Common myeloid progenitor, CD34-positive (primary cell): ENCODE measurements at regions of chr7 and their contacts with region 1.

Region 1: GRCh38 chr7:100563809-100564400 is 9.8 kb downstream of the SAP25 start:
- DNase-seq: peak; percentile 77 to 89 (median 85)
- H3K4me3 ChIP-seq: no peak overlapping the region
- H3K27ac ChIP-seq: no peak overlapping the region
- H3K4me1 ChIP-seq: peaks cover 0 to 25% (median 20%) of the 10 kb centered on the region in 4 experiments
- H3K27me3 ChIP-seq: no peaks in the 10 kb centered on the region

Region 2: DNA sequence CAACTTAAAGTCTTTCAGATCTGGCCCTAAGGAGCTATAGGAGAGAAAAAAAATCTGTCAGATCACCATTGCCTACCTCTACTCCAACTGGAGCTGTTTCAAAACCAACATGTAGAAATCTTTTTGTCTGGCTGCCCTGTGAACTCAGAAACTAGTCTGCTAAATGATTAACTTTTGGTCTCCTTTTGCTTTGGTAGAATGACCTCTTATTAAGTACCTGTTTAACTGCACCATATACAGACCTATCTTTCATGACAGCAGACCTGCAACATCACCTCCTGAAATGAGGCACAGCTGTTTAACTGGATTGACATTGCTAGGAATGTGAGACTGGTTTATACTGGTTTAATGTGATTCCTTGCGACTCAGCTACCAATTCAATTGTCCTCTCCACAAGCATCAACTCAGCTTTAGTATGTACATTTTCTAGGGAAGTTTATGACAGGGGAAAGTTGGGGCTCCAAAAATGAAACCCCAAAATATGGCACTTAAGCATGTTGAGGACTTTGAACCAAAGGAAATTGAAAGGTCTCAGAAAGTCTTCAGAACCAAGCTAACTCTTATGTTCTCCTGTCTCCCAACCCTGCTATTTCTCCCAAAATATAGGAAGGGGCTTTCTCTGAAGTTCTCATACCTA is 734.3 kb before region 1 on chr7:
- CTCF ChIA-PET with region 1: no interaction called
- POLR2A ChIA-PET with region 1: no interaction called
- DNase-seq: no peak
- H3K4me3 ChIP-seq: no peak overlapping the region
- H3K27ac ChIP-seq: no peak overlapping the region
- H3K4me1 ChIP-seq: peaks cover 0 to 3% (median 2%) of the 10 kb centered on the region in 4 experiments
- H3K27me3 ChIP-seq: peaks cover 0 to 10% (median 0%) of the 10 kb centered on the region in 5 experiments

Region 3: DNA sequence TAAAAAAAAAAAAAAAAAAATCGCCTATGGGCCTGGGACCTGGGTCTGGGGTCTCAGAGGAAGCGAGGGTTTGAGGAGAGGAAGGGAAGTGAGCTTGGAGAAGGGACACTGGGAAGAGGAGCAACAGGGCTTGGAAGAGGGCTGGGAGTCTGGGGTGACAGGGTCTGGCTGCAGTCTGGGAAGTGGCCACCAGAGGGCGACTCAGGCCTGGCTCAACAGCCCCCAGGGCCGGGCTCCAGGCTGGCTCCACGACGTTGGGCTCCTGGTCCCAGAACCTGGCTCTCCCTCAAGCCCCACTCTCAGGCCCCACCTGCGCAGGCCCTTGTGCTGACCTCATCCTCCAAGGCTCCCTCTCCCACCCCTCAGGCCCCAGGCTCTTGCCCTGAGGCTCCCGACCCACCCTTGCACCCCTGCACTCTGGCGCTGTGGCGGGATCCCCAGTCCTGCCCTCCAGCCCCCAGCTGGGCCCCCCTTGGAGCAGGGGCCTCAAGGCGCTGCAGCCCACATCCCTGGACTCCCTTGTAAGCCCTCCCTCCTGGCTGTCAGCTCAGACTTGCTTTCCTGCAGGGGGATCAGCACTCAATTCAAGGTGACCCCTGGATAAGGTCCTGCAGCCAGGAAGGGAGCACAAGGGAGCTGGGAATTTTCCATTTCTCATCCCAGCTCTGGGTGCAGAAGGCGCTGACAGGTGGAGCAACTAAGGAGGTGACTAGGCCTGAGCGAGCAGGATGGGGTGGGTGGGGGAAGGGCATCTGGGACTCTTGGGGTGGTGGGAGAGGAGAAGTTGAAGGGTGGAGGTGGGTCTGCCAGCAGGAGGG is 94.5 kb before region 1 on chr7:
- CTCF ChIA-PET with region 1: interaction called, 177 read pairs
- POLR2A ChIA-PET with region 1: no interaction called
- DNase-seq: peak; percentile 66 to 78 (median 71)
- H3K4me3 ChIP-seq: no peak overlapping the region
- H3K27ac ChIP-seq: no peak overlapping the region
- H3K4me1 ChIP-seq: peaks cover 0 to 26% (median 22%) of the 10 kb centered on the region in 4 experiments
- H3K27me3 ChIP-seq: no peaks in the 10 kb centered on the region

Region 4: DNA sequence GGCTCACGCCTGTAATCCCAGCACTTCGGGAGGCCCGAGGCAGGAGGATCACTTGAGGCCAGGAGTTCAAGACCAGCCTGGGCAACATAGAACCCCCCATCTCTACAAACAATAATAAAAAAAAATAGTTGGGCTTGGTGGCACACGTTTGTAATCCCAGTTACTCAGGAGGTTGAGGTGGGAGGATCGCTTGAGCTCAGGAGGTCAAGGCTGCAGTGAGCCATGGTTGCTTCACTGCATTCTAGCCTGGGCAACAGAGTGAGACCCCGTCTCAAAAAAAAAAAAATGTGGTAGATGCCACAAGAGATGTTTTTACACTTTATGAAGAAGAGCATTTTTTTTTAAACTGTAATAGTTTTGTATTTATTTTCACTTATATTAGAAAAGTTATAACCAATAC is 67.4 kb before region 1 on chr7:
- CTCF ChIA-PET with region 1: interaction called, 17 read pairs
- POLR2A ChIA-PET with region 1: no interaction called
- DNase-seq: no peak
- H3K4me3 ChIP-seq: no peak overlapping the region
- H3K27ac ChIP-seq: no peak overlapping the region
- H3K4me1 ChIP-seq: peaks cover 0 to 12% (median 7%) of the 10 kb centered on the region in 4 experiments
- H3K27me3 ChIP-seq: peaks cover 0 to 4% (median 0%) of the 10 kb centered on the region in 5 experiments

Region 5: GRCh38 chr7:100545360-100546128 is 18.4 kb before region 1 on chr7:
- CTCF ChIA-PET with region 1: interaction called, 220 read pairs
- POLR2A ChIA-PET with region 1: no interaction called
- DNase-seq: peak; percentile 55 to 86 (median 78)
- H3K4me3 ChIP-seq: no peak overlapping the region
- H3K27ac ChIP-seq: no peak overlapping the region
- H3K4me1 ChIP-seq: peaks cover 4 to 57% (median 36%) of the 10 kb centered on the region in 4 experiments
- H3K27me3 ChIP-seq: no peaks in the 10 kb centered on the region

Region 6: DNA sequence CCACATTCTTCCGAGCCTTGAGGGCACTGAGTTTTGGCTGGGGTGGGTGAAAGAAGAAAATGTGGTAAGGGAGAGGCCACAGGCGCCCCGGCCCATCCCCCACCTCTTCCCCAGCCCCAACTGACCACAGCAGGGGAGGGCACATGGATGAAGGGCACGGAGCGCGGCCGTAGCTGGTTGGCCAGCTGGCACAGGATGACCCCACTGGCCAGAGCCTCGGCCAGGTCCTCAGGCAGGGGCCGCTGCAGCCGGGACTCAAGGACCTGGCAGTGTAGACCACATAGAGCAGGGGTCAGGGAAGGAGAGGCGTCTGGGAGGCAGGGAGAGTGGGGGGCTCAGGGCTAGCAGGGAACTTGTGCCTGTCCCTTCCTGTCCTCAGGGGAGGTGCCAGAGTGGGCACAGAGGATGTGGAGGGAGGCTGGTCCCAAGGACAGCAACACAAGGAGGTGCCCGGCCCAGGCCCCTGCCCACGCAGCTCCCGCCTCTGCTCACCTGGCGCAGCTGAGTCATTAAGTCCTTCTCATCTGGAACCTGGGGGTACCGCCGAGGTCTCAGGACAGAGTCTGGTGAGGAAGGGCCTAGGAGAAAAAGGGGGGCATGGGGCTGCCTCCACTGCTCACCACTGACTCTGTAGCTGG is 12.0 kb after region 1 on chr7:
- CTCF ChIA-PET with region 1: interaction called, 242 read pairs
- POLR2A ChIA-PET with region 1: no interaction called
- DNase-seq: no peak
- H3K4me3 ChIP-seq: no peak overlapping the region
- H3K27ac ChIP-seq: no peak overlapping the region
- H3K4me1 ChIP-seq: peaks cover 0 to 7% (median 5%) of the 10 kb centered on the region in 4 experiments
- H3K27me3 ChIP-seq: no peaks in the 10 kb centered on the region

Region 7: DNA sequence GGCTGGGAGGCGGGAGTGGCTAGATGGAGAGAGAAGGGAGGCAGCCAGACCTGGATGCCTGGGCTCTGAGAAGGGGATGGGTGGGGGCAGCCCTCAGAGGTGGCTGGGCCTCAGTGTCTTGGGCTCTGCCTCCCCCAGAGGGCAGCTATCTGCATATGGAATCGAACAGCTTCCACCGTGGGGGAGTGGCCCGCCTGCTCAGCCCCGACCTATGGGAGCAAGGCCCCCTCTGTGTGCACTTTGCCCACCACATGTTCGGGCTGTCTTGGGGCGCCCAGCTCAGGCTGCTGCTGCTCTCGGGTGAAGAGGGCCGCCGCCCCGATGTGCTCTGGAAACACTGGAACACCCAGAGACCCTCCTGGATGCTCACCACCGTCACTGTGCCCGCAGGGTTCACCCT is 172.8 kb after region 1 on chr7:
- CTCF ChIA-PET with region 1: no interaction called
- POLR2A ChIA-PET with region 1: no interaction called
- DNase-seq: no peak
- H3K4me3 ChIP-seq: no peak overlapping the region
- H3K27ac ChIP-seq: no peak overlapping the region
- H3K4me1 ChIP-seq: peaks cover 0 to 4% (median 0%) of the 10 kb centered on the region in 4 experiments
- H3K27me3 ChIP-seq: peaks cover 0 to 3% (median 0%) of the 10 kb centered on the region in 5 experiments

Region 8: DNA sequence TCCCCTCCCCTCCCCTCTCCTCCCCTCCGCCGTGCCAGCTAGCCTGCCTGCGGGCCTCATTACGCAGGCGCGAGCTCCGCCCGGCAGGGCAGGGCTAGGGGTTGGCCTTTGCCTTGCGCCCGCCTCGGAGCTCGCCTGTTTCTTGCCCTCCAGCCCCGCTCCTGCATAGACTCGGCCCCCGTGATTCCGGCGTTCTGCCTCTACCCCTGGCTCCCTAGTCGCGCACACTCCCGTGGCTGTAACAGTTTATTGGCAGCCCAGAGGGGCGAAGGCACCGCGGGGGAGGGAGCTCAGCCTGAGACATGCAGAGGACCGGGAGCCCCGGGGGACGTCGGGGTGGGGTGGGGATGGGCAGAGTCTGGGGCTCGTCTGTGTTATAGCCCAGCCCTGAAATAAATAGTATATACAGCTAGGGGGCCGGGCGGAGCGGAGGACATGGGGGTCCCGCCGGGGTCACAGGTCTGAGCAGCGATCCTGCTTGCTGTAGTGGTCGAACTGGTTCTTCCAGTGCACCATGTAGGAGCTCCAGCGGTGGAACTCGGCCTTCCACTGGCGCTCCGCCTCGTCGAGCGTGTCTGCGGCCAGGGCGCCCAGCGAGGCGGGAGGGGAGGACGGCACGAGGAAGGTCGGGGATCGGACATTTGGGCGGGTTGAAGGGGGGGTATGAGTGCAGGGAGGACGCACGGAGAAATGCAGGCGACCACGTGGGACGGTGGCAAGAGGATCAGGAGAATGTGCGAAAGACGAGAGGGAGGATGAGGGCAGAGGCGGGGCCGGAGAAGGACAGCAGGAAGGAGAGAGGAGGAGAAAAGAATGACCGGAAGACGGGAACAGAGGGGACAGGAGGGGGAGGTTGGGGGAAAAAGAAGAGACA is 326.1 kb after region 1 on chr7:
- CTCF ChIA-PET with region 1: no interaction called
- POLR2A ChIA-PET with region 1: no interaction called
- DNase-seq: peak; percentile 90 to 94 (median 93)
- H3K4me3 ChIP-seq: peak overlapping the region; percentile 48 to 79 (median 67)
- H3K27ac ChIP-seq: no peak overlapping the region
- H3K4me1 ChIP-seq: peaks cover 4 to 61% (median 56%) of the 10 kb centered on the region in 4 experiments
- H3K27me3 ChIP-seq: peaks cover 0 to 38% (median 11%) of the 10 kb centered on the region in 5 experiments